CD8-positive, alpha-beta T cell (primary cell): ENCODE measurements at regions of chr5 and their contacts with region 1.

Region 1: DNA sequence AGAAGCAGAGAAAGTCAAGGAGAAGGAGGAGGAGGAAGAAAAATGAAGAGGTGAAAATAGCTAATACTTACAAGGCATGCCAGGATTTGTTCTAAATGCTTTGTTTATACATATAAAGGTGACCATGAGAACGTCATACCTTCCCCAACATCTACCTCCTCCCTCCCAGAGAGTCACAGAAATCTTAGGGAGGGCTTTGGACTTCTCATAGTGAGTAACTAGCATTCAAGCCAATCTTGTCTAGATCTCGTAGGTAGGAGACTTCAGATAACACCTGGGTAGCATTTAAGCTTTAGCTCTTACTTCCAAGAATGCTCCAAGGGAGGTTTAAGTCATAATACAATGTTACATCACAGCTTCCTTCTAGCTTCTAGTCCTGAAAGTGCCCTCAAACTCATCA is 36.5 kb upstream of the GPBP1 start:
- DNase-seq: peak in 1 of 9 experiments; percentile 2
- ATAC-seq: no peak
- H3K4me3 ChIP-seq: no peak overlapping the region
- H3K4me3 Mint-ChIP-seq: no peak overlapping the region
- H3K27ac ChIP-seq: no peak overlapping the region
- H3K27ac Mint-ChIP-seq: no peak overlapping the region
- H3K4me1 ChIP-seq: no peaks in the 10 kb centered on the region
- H3K4me1 Mint-ChIP-seq: no peaks in the 10 kb centered on the region
- H3K27me3 ChIP-seq: no peaks in the 10 kb centered on the region
- H3K27me3 Mint-ChIP-seq: no peaks in the 10 kb centered on the region
- CTCF ChIP-seq: no peak

Region 2: GRCh38 chr5:56827049-56827448 is 310.4 kb before region 1 on chr5:
- CTCF ChIA-PET with region 1: no interaction called
- POLR2A ChIA-PET with region 1: no interaction called
- intact Hi-C with region 1: no loop called
- DNase-seq: peak in 2 of 9 experiments; percentile 22 to 41
- ATAC-seq: peak; percentile 32
- H3K4me3 ChIP-seq: no peak overlapping the region
- H3K4me3 Mint-ChIP-seq: no peak overlapping the region
- H3K27ac ChIP-seq: no peak overlapping the region
- H3K27ac Mint-ChIP-seq: peak overlapping the region; percentile 70
- H3K4me1 ChIP-seq: peaks cover 71% of the 10 kb centered on the region
- H3K4me1 Mint-ChIP-seq: peaks cover 90% of the 10 kb centered on the region
- H3K27me3 ChIP-seq: no peaks in the 10 kb centered on the region
- H3K27me3 Mint-ChIP-seq: no peaks in the 10 kb centered on the region
- CTCF ChIP-seq: peak; percentile 14

Region 3: GRCh38 chr5:56909294-56910209 is 227.8 kb before region 1 on chr5 and contains the start of gene SETD9:
- CTCF ChIA-PET with region 1: interaction called, 9 read pairs
- POLR2A ChIA-PET with region 1: no interaction called
- intact Hi-C with region 1: loop called in 1 of 2 experiments (anchors 1 kb)
- DNase-seq: peak; percentile 67 to 94 (median 87)
- ATAC-seq: peak; percentile 82
- H3K4me3 ChIP-seq: peak within 1 kb of the TSS; percentile 88
- H3K4me3 Mint-ChIP-seq: peak within 1 kb of the TSS; percentile 89
- H3K27ac ChIP-seq: peak within 1 kb of the TSS; percentile 61 to 87
- H3K27ac Mint-ChIP-seq: peak within 1 kb of the TSS; percentile 88
- H3K4me1 ChIP-seq: peaks cover 8% of the 10 kb centered on the region
- H3K4me1 Mint-ChIP-seq: peaks cover 20% of the 10 kb centered on the region
- H3K27me3 ChIP-seq: no peaks in the 10 kb centered on the region
- H3K27me3 Mint-ChIP-seq: no peaks in the 10 kb centered on the region
- CTCF ChIP-seq: no peak
- total RNA-seq, gene SETD9: 2.5 to 2.9 TPM